ENCODE measurements at regions of chr9 and their contacts with region 1.

Region 1: GRCh38 chr9:136312436-136312835 is 8.5 kb upstream of the CCDC187 start:
- DNase-seq: peak; percentile 41 to 82 (median 76)
- ATAC-seq: peak; percentile 67 to 70
- H3K4me3 ChIP-seq: no peak overlapping the region
- H3K27ac ChIP-seq: no peak overlapping the region
- H3K4me1 ChIP-seq: no peaks in the 10 kb centered on the region
- H3K27me3 ChIP-seq: no peaks in the 10 kb centered on the region

Region 2: GRCh38 chr9:136400038-136400834 is 87.8 kb after region 1 on chr9 and contains the start of gene SNAPC4:
- intact Hi-C with region 1: loop called in 2 of 4 experiments (anchors 5 kb)
- DNase-seq: peak; percentile 88 to 96 (median 95)
- ATAC-seq: peak; percentile 90 to 92
- H3K4me3 ChIP-seq: peak within 1 kb of the TSS; percentile 82
- H3K27ac ChIP-seq: no peak within 1 kb of the TSS
- H3K4me1 ChIP-seq: no peaks in the 10 kb centered on the region
- H3K27me3 ChIP-seq: no peaks in the 10 kb centered on the region
- total RNA-seq, gene SNAPC4: 3.2 to 4.4 (median 3.9) TPM

Region 3: GRCh38 chr9:136462664-136463063 is 150.2 kb after region 1 on chr9:
- intact Hi-C with region 1: no loop called
- DNase-seq: peak in 1 of 3 donors; percentile 35
- ATAC-seq: no peak
- H3K4me3 ChIP-seq: no peak overlapping the region
- H3K27ac ChIP-seq: no peak overlapping the region
- H3K4me1 ChIP-seq: no peaks in the 10 kb centered on the region
- H3K27me3 ChIP-seq: no peaks in the 10 kb centered on the region

Measured in right cardiac atrium (tissue), 5 donors.